ENCODE measurements at regions of chr2 and their contacts with region 1.

Region 1: GRCh38 chr2:9287400-9288043 is 80.9 kb downstream of the ASAP2 start:
- DNase-seq: peak; percentile 99
- H3K4me3 ChIP-seq: no peak overlapping the region
- H3K27ac ChIP-seq: peak overlapping the region; percentile 94
- H3K4me1 ChIP-seq: peaks cover 56% of the 10 kb centered on the region
- H3K27me3 ChIP-seq: no peaks in the 10 kb centered on the region
- CTCF ChIP-seq: no peak

Region 2: GRCh38 chr2:8693155-8693821 is 594.2 kb before region 1 on chr2:
- CTCF ChIA-PET with region 1: no interaction called
- dilution Hi-C with region 1: no loop called
- in situ Hi-C with region 1: no loop called
- intact Hi-C with region 1: no loop called
- DNase-seq: peak; percentile 28
- H3K4me3 ChIP-seq: peak overlapping the region; percentile 29 to 38 (median 38)
- H3K27ac ChIP-seq: no peak overlapping the region
- H3K4me1 ChIP-seq: peaks cover 11% of the 10 kb centered on the region
- H3K27me3 ChIP-seq: no peaks in the 10 kb centered on the region
- CTCF ChIP-seq: peak; percentile 43 to 82

Region 3: GRCh38 chr2:9251154-9252001 is 36.1 kb before region 1 on chr2:
- CTCF ChIA-PET with region 1: no interaction called
- dilution Hi-C with region 1: no loop called
- in situ Hi-C with region 1: no loop called
- intact Hi-C with region 1: loop called (anchors 1 kb)
- DNase-seq: peak; percentile 82
- H3K4me3 ChIP-seq: no peak overlapping the region
- H3K27ac ChIP-seq: peak overlapping the region; percentile 95
- H3K4me1 ChIP-seq: peaks cover 71% of the 10 kb centered on the region
- H3K27me3 ChIP-seq: no peaks in the 10 kb centered on the region
- CTCF ChIP-seq: no peak

Region 4: DNA sequence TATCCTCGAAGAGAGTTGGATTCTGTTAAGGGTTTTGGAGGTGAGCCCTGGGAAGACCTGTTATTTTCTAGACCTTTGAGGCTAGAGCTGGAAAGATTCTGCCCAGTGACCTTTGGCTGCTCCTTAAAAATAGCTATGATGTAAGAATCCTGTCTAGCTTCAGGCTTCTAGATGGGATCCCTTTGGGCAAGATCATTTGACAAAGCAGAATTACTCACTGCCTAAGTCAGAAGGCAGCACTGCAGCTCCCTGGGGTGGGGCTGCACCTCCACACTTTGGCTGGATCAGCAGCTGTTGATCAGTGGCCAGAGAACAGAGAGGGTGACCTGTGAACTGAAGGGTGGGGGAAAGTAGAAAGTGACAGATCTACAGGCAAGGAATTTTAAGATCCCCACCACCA is 22.9 kb after region 1 on chr2:
- CTCF ChIA-PET with region 1: no interaction called
- dilution Hi-C with region 1: no loop called
- in situ Hi-C with region 1: no loop called
- intact Hi-C with region 1: loop called (anchors 1 kb)
- DNase-seq: peak; percentile 93
- H3K4me3 ChIP-seq: no peak overlapping the region
- H3K27ac ChIP-seq: peak overlapping the region; percentile 95
- H3K4me1 ChIP-seq: peaks cover 69% of the 10 kb centered on the region
- H3K27me3 ChIP-seq: no peaks in the 10 kb centered on the region
- CTCF ChIP-seq: no peak

Region 5: DNA sequence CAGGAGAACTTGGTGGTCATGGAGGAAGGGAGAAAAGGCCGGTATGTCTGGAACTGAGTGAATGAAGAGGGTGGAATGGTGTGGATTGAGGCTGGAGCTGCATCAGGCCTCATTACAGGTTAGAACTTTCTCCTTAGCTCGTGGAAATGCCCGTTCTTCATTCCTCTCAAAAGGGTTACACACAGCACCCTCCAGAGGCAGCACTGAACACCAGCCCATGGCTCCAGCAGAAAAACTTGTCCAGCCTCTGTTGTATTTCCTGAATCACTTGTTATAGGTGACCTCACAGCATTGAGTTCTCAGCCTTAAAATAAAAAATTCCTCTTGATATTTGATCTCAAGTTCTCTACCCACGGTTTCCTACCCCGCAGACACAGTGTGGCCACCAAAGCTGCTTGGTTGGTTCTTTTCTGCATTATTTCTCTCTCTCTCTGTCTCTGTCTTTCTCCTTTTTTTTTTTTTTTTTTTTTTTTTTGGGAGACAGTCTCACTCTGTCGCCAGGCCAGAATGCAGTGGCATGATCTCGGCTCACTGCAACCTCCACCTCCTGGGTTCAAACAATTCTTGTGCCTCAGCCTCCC is 46.2 kb after region 1 on chr2:
- CTCF ChIA-PET with region 1: no interaction called
- dilution Hi-C with region 1: no loop called
- in situ Hi-C with region 1: no loop called
- intact Hi-C with region 1: loop called (anchors 5 kb)
- DNase-seq: peak; percentile 71
- H3K4me3 ChIP-seq: no peak overlapping the region
- H3K27ac ChIP-seq: no peak overlapping the region
- H3K4me1 ChIP-seq: peaks cover 13% of the 10 kb centered on the region
- H3K27me3 ChIP-seq: no peaks in the 10 kb centered on the region
- CTCF ChIP-seq: peak; percentile 75 to 85

Region 6: DNA sequence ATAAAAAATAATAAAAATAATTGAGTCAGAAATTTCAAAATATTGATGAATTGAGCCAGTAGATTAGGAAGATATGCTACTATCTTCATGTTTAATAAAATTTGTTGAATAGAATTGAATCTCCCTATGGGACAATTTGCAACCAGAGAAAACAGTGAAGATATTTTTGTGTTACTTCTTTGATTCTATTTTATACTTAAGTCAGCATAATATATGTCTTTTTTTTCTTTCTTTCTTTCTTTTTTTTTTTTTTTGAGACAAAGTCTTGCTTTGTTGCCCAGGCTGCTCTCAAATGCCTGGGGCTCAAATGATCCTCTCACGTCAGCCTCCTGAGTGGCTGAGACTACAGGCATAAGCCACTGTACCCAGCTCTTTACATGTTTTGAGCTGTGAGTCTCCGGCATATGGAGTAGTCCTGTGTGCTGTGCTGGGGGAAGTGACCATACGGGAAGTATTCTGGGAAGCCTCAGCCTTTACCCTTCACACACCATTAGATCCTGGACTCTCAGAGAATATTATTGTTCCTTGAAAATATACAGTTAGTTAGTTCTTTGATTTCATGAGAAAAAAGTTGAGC is 173.0 kb after region 1 on chr2:
- CTCF ChIA-PET with region 1: no interaction called
- dilution Hi-C with region 1: no loop called
- in situ Hi-C with region 1: no loop called
- intact Hi-C with region 1: no loop called
- DNase-seq: no peak
- H3K4me3 ChIP-seq: no peak overlapping the region
- H3K27ac ChIP-seq: no peak overlapping the region
- H3K4me1 ChIP-seq: no peaks in the 10 kb centered on the region
- H3K27me3 ChIP-seq: no peaks in the 10 kb centered on the region
- CTCF ChIP-seq: no peak

Measured in mammary epithelial cell (primary cell).